ENCODE measurements at regions of chr11 and their contacts with region 1.

Region 1: DNA sequence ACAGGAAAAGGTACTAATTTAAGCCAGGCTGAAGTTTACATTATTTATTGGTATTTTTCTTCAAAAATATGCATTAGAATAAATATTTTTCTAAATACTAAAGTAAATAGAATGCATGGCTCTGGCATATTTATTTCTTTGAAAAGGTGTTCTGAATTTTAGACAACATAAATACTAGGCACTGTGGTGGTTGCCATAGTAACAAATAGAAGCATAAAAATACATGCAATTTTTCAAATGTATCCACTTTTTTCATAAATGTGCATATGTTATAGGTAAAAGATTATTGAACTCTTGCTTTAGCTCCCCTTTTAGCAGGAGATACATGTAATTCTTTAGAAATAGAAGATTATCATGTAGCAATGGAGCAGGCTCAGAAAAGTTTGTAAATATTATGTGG is 18.4 kb downstream of the DCDC1 start:
- DNase-seq: no peak
- H3K4me3 ChIP-seq: no peak overlapping the region
- H3K27me3 ChIP-seq: no peaks in the 10 kb centered on the region
- CTCF ChIP-seq: no peak

Region 2: DNA sequence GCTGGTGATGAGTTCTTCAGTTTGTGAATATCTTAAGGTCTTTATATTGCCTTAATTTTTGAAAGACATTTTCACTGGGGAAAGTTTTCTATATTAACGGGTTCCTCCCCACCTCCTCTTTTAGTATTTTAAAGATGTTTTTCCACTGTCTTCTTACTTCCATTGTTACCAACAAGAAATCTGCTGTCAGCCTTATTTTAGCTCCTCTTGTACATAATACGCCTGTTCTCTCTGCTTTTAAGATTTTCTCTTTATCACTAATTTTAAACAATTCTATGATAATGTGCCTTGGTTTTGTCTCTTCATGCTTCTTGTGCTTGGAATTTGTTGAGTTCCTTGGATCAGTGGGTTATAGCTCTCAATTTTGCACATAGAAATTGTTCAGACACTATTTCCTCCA is 262.1 kb before region 1 on chr11:
- CTCF ChIA-PET with region 1: no interaction called
- POLR2A ChIA-PET with region 1: no interaction called
- DNase-seq: no peak
- H3K4me3 ChIP-seq: no peak overlapping the region
- H3K27me3 ChIP-seq: no peaks in the 10 kb centered on the region
- CTCF ChIP-seq: no peak

Region 3: DNA sequence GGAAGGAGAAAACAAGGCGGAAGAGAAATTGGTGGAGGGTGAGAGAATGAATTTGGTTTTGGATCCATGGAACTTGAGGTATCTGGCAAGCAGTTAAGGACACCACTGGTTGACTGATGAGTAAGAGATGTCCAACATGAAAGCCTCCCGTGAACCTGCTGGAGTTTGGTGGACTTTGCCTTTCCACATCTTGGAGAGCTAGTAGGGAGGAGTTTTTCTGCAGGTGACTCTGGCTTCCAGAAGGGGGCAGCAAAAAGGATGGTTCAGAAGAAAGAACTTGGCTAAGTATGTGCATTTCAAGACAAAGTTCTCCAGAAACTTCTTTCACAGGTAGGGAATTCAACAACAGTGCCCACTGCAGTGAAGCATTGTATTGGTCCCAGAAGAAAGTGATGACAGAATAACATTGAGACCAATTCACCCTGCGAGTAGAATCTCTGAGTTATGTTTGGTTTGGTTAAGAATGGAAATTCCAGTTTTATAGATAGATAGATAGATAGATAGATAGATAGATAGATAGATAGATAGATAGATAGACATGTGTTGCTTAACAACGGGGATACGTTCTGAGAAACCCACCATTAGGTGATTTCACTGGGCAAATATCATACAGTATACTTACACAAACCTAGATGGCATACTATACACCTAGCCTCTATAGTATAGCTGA is 10.1 kb before region 1 on chr11:
- CTCF ChIA-PET with region 1: interaction called, 13 read pairs
- POLR2A ChIA-PET with region 1: no interaction called
- DNase-seq: no peak
- H3K4me3 ChIP-seq: no peak overlapping the region
- H3K27me3 ChIP-seq: no peaks in the 10 kb centered on the region
- CTCF ChIP-seq: peak; percentile 69

Region 4: GRCh38 chr11:31375879-31376278 is 24.7 kb after region 1 on chr11:
- CTCF ChIA-PET with region 1: no interaction called
- POLR2A ChIA-PET with region 1: no interaction called
- DNase-seq: no peak
- H3K4me3 ChIP-seq: no peak overlapping the region
- H3K27me3 ChIP-seq: no peaks in the 10 kb centered on the region
- CTCF ChIP-seq: no peak

Region 5: DNA sequence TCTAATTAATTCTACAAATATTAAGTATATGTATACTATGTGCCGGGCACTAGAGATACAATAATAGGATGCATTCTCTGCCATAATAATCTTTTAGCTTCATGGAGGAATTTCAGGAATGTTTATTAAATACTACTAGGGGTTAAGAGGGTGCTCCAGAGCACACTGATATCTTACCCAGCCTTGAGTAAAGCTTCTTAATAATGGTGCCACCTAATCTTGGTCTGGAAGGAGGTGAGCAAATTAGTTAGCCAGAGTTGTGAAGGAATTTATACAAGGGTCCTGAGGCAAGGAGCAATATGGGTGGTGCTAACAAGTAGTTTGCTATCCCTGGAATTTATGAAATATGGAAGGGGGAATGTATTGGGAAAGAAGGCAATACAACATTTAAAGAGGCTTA is 180.1 kb after region 1 on chr11:
- CTCF ChIA-PET with region 1: no interaction called
- POLR2A ChIA-PET with region 1: no interaction called
- DNase-seq: no peak
- H3K4me3 ChIP-seq: no peak overlapping the region
- H3K27me3 ChIP-seq: no peaks in the 10 kb centered on the region
- CTCF ChIP-seq: no peak

Measured in BJ (cell line).